Psoas muscle (tissue), 8 donors: ENCODE measurements at regions of chr1 and their contacts with region 1.

Region 1: GRCh38 chr1:67760030-67760821 is 73.0 kb downstream of the GNG12 start:
- DNase-seq: peak; percentile 41 to 62
- ATAC-seq: peak; percentile 84 to 91 (median 86)
- H3K4me3 ChIP-seq: no peak overlapping the region
- H3K27ac ChIP-seq: peak overlapping the region; percentile 66
- H3K4me1 ChIP-seq: peaks cover 21% of the 10 kb centered on the region
- H3K27me3 ChIP-seq: no peaks in the 10 kb centered on the region
- CTCF ChIP-seq: peak; percentile 90

Region 2: GRCh38 chr1:67535474-67535873 is 224.8 kb before region 1 on chr1:
- intact Hi-C with region 1: loop called (anchors 1 to 2 kb)
- DNase-seq: peak; percentile 77 to 85
- ATAC-seq: peak; percentile 90 to 93 (median 92)
- H3K4me3 ChIP-seq: no peak overlapping the region
- H3K27ac ChIP-seq: no peak overlapping the region
- H3K4me1 ChIP-seq: peaks cover 11% of the 10 kb centered on the region
- H3K27me3 ChIP-seq: no peaks in the 10 kb centered on the region
- CTCF ChIP-seq: peak; percentile 95

Region 3: GRCh38 chr1:67561704-67562113 is 198.5 kb before region 1 on chr1:
- intact Hi-C with region 1: loop called in 1 of 2 experiments (anchors 2 kb)
- DNase-seq: peak; percentile 93 to 97
- ATAC-seq: peak; percentile 94 to 97 (median 94)
- H3K4me3 ChIP-seq: peak overlapping the region; percentile 38
- H3K27ac ChIP-seq: peak overlapping the region; percentile 92
- H3K4me1 ChIP-seq: peaks cover 42% of the 10 kb centered on the region
- H3K27me3 ChIP-seq: no peaks in the 10 kb centered on the region
- CTCF ChIP-seq: peak; percentile 93

Region 4: GRCh38 chr1:67832737-67833601 is 72.7 kb after region 1 on chr1 and contains the start of gene GNG12:
- intact Hi-C with region 1: loop called (anchors 5 kb)
- DNase-seq: peak; percentile 74 to 84
- ATAC-seq: peak; percentile 79 to 82 (median 82)
- H3K4me3 ChIP-seq: peak within 1 kb of the TSS; percentile 91
- H3K27ac ChIP-seq: peak within 1 kb of the TSS; percentile 85
- H3K4me1 ChIP-seq: peaks cover 18% of the 10 kb centered on the region
- H3K27me3 ChIP-seq: no peaks in the 10 kb centered on the region
- CTCF ChIP-seq: no peak
- total RNA-seq, gene GNG12: 18.6 to 25.1 (median 20.3) TPM

Region 5: DNA sequence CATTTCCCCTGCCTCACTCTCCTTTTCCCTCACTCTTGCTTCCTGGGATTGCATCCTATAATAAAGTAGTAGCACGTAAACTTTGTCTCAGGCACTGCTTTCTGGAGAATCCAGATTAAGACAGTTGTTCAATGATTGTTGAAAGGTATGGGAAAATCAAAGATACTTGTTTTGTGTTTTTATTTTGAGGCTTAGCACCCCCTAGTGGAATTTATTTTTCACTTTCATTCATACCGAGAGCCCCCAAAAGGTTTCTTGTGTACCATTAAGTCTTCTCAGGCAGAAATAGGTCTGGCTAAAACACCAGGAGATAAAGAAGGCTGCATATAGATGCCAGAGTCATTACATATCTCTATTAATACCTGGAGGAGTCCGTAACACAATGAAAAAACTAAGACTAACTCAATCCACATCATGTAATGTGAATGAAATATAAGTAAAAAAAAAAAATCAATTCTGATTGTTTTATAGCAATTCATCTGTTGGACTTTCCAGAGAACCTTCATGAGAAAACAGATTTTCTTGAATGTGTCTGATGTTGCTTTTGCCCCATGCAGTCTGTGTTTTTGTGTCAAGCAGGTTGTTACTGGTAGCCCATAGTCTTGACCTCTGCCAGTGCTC is 586.1 kb after region 1 on chr1:
- intact Hi-C with region 1: loop called in 1 of 2 experiments (anchors 10 kb)
- DNase-seq: no peak
- ATAC-seq: peak in 1 of 4 donors; percentile 51
- H3K4me3 ChIP-seq: no peak overlapping the region
- H3K27ac ChIP-seq: no peak overlapping the region
- H3K4me1 ChIP-seq: no peaks in the 10 kb centered on the region
- H3K27me3 ChIP-seq: no peaks in the 10 kb centered on the region
- CTCF ChIP-seq: peak; percentile 54